ENCODE measurements at regions of chr12 and their contacts with region 1.

Region 1: GRCh38 chr12:126784328-126784921 is 1482.5 kb upstream of the TMEM132C start:
- DNase-seq: peak; percentile 66
- ATAC-seq: peak; percentile 91
- H3K4me3 ChIP-seq: no peak overlapping the region
- H3K27ac ChIP-seq: no peak overlapping the region
- H3K4me1 ChIP-seq: no peaks in the 10 kb centered on the region
- H3K27me3 ChIP-seq: peaks cover 34% of the 10 kb centered on the region
- CTCF ChIP-seq: peak; percentile 77 to 87 (median 79)
- POLR2A ChIP-seq: no peak
- RAD21 ChIP-seq: peak; percentile 75

Region 2: DNA sequence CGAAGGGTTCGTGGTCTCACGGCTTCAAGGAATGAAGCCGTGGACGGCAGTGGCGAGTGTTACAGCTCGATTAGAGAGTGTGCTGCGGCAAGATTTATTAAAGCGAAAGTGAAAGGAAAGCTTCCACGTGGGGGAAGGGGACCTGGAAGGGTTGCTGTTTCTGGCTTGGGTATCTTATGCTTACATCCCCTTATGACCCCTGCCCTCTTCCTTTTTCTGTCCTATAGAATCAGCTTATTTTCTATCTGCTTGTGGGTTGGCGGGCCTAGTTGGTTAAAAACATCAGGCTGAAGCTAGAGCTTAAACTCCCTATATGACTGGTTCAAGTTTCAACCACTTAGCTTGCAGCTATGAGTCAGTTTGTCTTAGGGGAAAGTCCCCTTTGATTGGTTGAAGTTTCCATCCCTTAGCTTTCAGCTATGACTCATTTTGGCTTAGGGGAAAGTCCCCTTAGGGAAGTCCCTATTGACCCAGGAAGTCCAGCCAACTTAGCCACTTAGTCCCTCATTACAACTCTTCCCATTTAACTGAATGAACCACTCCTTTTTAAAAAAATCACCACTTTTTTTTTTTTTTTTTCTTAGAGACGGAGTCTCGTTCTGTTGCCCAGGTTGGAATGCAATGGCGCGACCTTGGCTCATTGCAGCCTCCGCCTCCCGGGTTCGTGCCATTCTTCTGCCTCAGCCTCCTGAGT is 12.1 kb before region 1 on chr12:
- CTCF ChIA-PET with region 1: interaction called, 19 read pairs
- POLR2A ChIA-PET with region 1: interaction called, 4 read pairs
- RAD21 ChIA-PET with region 1: interaction called in 1 of 2 experiments, 3 read pairs
- intact Hi-C with region 1: no loop called
- DNase-seq: peak; percentile 93
- ATAC-seq: peak; percentile 89
- H3K4me3 ChIP-seq: peak overlapping the region; percentile 64 to 82
- H3K27ac ChIP-seq: peak overlapping the region; percentile 51
- H3K4me1 ChIP-seq: peaks cover 0 to 13% of the 10 kb centered on the region in 2 experiments; a peak in 3 of 4 replicates
- H3K27me3 ChIP-seq: no peaks in the 10 kb centered on the region
- CTCF ChIP-seq: no peak
- POLR2A ChIP-seq: no peak
- RAD21 ChIP-seq: no peak

Region 3: DNA sequence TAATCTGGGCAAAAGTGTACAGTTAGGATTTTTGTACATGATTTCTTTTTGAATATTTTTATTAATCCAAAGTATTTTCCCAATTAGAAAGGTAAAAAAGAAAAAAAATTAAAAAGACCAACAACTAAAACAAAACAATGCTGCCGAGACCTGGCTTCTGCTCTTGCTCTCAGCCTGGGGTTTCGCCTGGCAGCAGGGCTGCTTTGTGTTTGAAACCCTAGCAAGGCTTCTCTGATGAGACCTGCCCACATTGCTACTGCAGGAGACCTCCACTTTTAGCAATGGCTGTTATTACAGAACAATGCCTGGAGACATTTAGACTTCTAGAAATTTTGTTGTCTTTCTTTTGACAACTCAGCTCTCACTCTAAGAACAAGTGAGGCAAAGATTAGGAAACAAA is 329.5 kb after region 1 on chr12:
- CTCF ChIA-PET with region 1: interaction called, 5 read pairs
- POLR2A ChIA-PET with region 1: no interaction called
- RAD21 ChIA-PET with region 1: no interaction called
- intact Hi-C with region 1: loop called (anchors 5 kb)
- DNase-seq: no peak
- ATAC-seq: no peak
- H3K4me3 ChIP-seq: no peak overlapping the region
- H3K27ac ChIP-seq: no peak overlapping the region
- H3K4me1 ChIP-seq: peaks cover 10 to 11% of the 10 kb centered on the region in 2 experiments
- H3K27me3 ChIP-seq: no peaks in the 10 kb centered on the region
- CTCF ChIP-seq: no peak
- POLR2A ChIP-seq: no peak
- RAD21 ChIP-seq: no peak

Region 4: GRCh38 chr12:127260531-127260930 is 476.1 kb after region 1 on chr12:
- CTCF ChIA-PET with region 1: no interaction called
- POLR2A ChIA-PET with region 1: no interaction called
- RAD21 ChIA-PET with region 1: no interaction called
- intact Hi-C with region 1: no loop called
- DNase-seq: no peak
- ATAC-seq: no peak
- H3K4me3 ChIP-seq: no peak overlapping the region
- H3K27ac ChIP-seq: no peak overlapping the region
- H3K4me1 ChIP-seq: no peaks in the 10 kb centered on the region
- H3K27me3 ChIP-seq: no peaks in the 10 kb centered on the region
- CTCF ChIP-seq: no peak
- POLR2A ChIP-seq: no peak
- RAD21 ChIP-seq: no peak

Region 5: DNA sequence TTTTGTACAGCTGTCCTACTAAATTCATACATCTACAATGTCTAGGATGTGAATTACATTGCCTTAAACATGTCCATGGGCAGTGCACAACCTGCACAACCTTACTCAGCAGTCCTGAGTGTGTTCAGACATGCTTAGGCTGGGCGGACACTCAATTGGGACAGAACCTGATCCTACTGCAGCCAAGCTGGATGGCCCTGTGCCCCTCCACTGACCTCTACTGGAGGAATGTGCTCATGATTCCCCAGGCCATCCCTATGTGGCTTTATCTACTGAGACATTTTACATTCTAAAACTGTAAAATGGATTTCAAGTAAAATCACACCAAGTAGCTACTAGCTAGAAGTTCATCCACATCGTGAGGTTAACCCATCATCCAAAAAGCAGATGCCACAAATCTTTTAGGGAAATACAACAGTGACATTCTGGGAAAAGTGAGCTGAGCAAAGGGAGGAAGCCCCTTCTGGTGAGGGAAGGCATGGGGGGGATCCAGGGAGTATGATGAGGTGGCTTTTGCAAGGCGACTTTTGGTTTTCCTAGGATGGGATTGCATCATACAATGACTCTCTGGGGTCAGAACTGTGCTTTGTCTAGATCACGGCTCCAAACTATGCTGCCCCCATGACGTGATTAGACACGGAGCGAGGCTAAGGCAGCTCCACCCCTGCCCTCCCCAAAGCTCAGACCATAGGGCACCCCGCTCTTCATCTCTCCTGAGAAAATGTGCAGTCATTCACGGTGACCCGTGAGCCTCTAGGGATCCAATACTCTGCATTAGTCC is 570.8 kb after region 1 on chr12:
- CTCF ChIA-PET with region 1: interaction called, 9 read pairs
- POLR2A ChIA-PET with region 1: no interaction called
- RAD21 ChIA-PET with region 1: no interaction called
- intact Hi-C with region 1: loop called (anchors 2 kb)
- DNase-seq: no peak
- ATAC-seq: peak; percentile 89
- H3K4me3 ChIP-seq: no peak overlapping the region
- H3K27ac ChIP-seq: no peak overlapping the region
- H3K4me1 ChIP-seq: no peaks in the 10 kb centered on the region
- H3K27me3 ChIP-seq: no peaks in the 10 kb centered on the region
- CTCF ChIP-seq: peak in 2 of 3 experiments; percentile 58 to 62; a peak in 4 of 6 replicates
- POLR2A ChIP-seq: no peak
- RAD21 ChIP-seq: peak; percentile 52

Region 6: DNA sequence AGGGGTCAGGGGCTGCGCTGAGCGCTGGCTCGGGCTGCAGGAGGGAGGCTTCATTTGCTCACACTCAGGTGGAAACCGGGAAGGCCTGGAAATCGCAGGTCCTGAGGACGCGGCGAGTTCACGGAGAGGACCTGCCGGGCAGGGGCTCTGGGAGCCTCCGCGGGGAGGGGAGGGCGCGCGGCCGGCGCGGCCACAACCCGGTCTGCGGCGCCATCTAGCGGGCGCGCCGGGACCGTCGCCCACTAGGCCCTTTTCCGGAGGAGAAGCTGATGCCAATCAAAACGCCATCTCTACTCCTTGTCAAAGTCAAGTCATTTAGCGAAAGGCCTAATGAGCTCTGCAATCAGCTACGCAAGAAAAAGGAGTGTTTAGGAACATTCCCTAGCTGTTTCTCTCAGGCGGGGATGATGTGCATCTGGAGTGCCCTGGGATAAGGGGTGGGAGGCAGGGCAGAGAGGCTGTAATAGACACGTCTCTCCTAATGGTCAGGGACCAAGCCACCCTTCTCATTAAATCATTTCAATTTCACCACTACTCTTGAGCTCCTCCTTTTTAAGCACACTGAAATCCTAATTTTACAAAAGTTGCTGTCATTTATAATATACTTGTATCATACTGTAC is 596.7 kb after region 1 on chr12:
- CTCF ChIA-PET with region 1: interaction called, 21 read pairs
- POLR2A ChIA-PET with region 1: no interaction called
- RAD21 ChIA-PET with region 1: interaction called in 1 of 2 experiments, 3 read pairs
- intact Hi-C with region 1: loop called (anchors 1 kb)
- DNase-seq: peak; percentile 21
- ATAC-seq: peak; percentile 99
- H3K4me3 ChIP-seq: no peak overlapping the region
- H3K27ac ChIP-seq: no peak overlapping the region
- H3K4me1 ChIP-seq: no peaks in the 10 kb centered on the region
- H3K27me3 ChIP-seq: no peaks in the 10 kb centered on the region
- CTCF ChIP-seq: peak; percentile 74 to 93 (median 92)
- POLR2A ChIP-seq: no peak
- RAD21 ChIP-seq: peak; percentile 89